Sigmoid colon (tissue), 7 donors: ENCODE measurements at regions of chr13 and their contacts with region 1.

Region 1: GRCh38 chr13:30114571-30115256 is 192.6 kb downstream of the KATNAL1 start:
- DNase-seq: peak; percentile 94
- H3K4me3 ChIP-seq: peak overlapping the region; percentile 30 to 65 (median 64)
- H3K27ac ChIP-seq: peak overlapping the region; percentile 47 to 78 (median 74)
- H3K4me1 ChIP-seq: peaks cover 0 to 53% (median 50%) of the 10 kb centered on the region in 4 donors
- H3K27me3 ChIP-seq: no peaks in the 10 kb centered on the region
- CTCF ChIP-seq: peak; percentile 79 to 90 (median 88)
- EP300 ChIP-seq: no peak
- POLR2A ChIP-seq: no peak

Region 2: GRCh38 chr13:29435125-29435911 is 679.4 kb before region 1 on chr13:
- intact Hi-C with region 1: loop called (anchors 5 kb)
- DNase-seq: peak; percentile 88
- H3K4me3 ChIP-seq: no peak overlapping the region
- H3K27ac ChIP-seq: peak overlapping the region; percentile 73 to 88 (median 82)
- H3K4me1 ChIP-seq: peaks cover 0 to 55% (median 47%) of the 10 kb centered on the region in 4 donors
- H3K27me3 ChIP-seq: no peaks in the 10 kb centered on the region
- CTCF ChIP-seq: no peak
- EP300 ChIP-seq: peak; percentile 94 to 97 (median 96)
- POLR2A ChIP-seq: no peak

Region 3: GRCh38 chr13:29589967-29590366 is 524.7 kb before region 1 on chr13:
- intact Hi-C with region 1: loop called (anchors 2 kb)
- DNase-seq: no peak
- H3K4me3 ChIP-seq: no peak overlapping the region
- H3K27ac ChIP-seq: peak overlapping the region in 3 of 4 donors; percentile 49 to 96 (median 53)
- H3K4me1 ChIP-seq: peaks cover 0 to 59% (median 29%) of the 10 kb centered on the region in 4 donors
- H3K27me3 ChIP-seq: no peaks in the 10 kb centered on the region
- CTCF ChIP-seq: no peak
- EP300 ChIP-seq: no peak
- POLR2A ChIP-seq: no peak

Region 4: GRCh38 chr13:29771247-29771646 is 343.5 kb before region 1 on chr13:
- intact Hi-C with region 1: loop called (anchors 2 kb)
- DNase-seq: no peak
- H3K4me3 ChIP-seq: no peak overlapping the region
- H3K27ac ChIP-seq: no peak overlapping the region
- H3K4me1 ChIP-seq: no peaks in the 10 kb centered on the region
- H3K27me3 ChIP-seq: no peaks in the 10 kb centered on the region
- CTCF ChIP-seq: peak in 2 of 4 experiments; percentile 24 to 47
- EP300 ChIP-seq: no peak
- POLR2A ChIP-seq: no peak

Region 5: GRCh38 chr13:29923554-29924481 is 190.9 kb before region 1 on chr13:
- intact Hi-C with region 1: loop called (anchors 5 kb)
- DNase-seq: peak; percentile 90
- H3K4me3 ChIP-seq: no peak overlapping the region
- H3K27ac ChIP-seq: peak overlapping the region; percentile 75 to 88 (median 82)
- H3K4me1 ChIP-seq: peaks cover 0 to 40% (median 34%) of the 10 kb centered on the region in 4 donors
- H3K27me3 ChIP-seq: no peaks in the 10 kb centered on the region
- CTCF ChIP-seq: peak; percentile 46 to 70 (median 62)
- EP300 ChIP-seq: no peak
- POLR2A ChIP-seq: no peak

Region 6: DNA sequence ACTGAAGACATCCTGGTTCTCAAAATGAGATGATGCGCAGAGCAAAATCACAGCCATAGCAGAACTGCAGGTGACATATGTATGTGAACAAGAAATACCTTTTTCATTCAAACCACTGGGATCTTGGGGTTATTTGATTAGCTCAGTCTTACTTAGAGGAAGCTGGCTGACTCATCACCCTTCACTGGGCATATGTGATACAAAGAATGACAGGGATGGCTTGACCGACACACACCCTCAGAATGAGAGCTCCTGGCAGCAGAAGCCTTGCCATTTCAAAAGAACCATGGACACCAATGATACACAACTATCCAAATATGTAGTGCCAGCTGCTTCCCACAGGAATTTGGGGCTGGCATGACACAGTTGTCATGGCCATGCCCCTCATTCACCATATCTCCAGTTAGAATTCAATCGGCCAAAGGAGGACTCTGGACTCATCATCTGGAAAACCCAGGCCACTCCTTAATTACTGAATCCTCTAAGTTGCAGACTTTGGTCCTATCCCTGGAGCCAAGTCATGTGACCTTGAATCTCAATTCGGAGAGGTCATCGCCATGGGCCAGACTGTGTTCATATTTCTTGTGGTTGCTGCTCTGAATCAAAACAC is 76.9 kb after region 1 on chr13:
- intact Hi-C with region 1: no loop called
- DNase-seq: no peak
- H3K4me3 ChIP-seq: no peak overlapping the region
- H3K27ac ChIP-seq: no peak overlapping the region
- H3K4me1 ChIP-seq: no peaks in the 10 kb centered on the region
- H3K27me3 ChIP-seq: no peaks in the 10 kb centered on the region
- CTCF ChIP-seq: no peak
- EP300 ChIP-seq: no peak
- POLR2A ChIP-seq: no peak

Region 7: DNA sequence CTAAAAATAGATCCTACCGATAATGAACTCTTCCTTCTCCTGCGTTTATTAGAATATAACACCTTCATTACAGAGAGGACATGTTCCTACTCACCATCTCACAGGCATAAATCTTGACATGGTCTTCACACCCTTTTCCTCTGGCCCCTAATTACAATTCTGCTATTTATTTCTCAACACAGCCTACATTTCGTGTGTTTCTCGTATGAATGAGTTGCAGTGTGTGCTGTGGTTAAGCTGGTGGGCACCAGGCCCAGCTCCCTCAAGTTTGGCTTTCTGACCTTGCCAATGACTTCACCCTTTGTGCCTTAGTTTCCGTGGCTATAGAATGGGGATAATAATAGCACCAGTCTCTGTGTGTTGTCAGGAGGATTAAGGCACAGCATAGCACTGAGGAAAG is 204.9 kb after region 1 on chr13:
- intact Hi-C with region 1: no loop called
- DNase-seq: no peak
- H3K4me3 ChIP-seq: no peak overlapping the region
- H3K27ac ChIP-seq: peak overlapping the region in 3 of 4 donors; percentile 2 to 53 (median 39)
- H3K4me1 ChIP-seq: peaks cover 0 to 47% (median 26%) of the 10 kb centered on the region in 4 donors
- H3K27me3 ChIP-seq: no peaks in the 10 kb centered on the region
- CTCF ChIP-seq: no peak
- EP300 ChIP-seq: no peak
- POLR2A ChIP-seq: no peak